Motor neuron (in vitro differentiated cells): ENCODE measurements at regions of chr2 and their contacts with region 1.

Region 1: GRCh38 chr2:70070541-70071268 is 16.6 kb upstream of the PCBP1 start:
- ATAC-seq: peak; percentile 96 to 100 (median 99)
- H3K4me3 ChIP-seq: no peak overlapping the region
- H3K27ac ChIP-seq: peak overlapping the region; percentile 57 to 81
- H3K4me1 ChIP-seq: peaks cover 0 to 10% of the 10 kb centered on the region in 2 donors

Region 2: DNA sequence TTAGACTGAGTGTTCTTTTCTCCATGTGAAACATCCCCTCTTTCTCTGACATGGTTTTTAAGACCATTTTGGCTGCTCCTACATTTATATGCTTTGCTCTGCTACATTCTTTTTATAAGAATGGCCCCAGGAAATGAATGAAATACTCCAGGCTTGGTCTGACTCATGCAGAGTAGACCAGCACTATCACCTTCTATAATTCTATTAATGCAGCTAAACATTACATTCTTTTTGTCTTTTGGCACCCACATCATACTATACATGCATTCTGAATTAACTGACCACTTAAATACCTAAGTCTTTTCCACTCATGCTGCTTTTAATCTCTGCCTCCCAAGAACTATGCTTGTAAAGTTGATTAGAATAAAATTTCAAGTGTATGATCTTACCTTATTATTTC is 521.3 kb before region 1 on chr2:
- in situ Hi-C with region 1: no loop called
- ATAC-seq: no peak
- H3K4me3 ChIP-seq: no peak overlapping the region
- H3K27ac ChIP-seq: no peak overlapping the region
- H3K4me1 ChIP-seq: no peaks in the 10 kb centered on the region

Region 3: DNA sequence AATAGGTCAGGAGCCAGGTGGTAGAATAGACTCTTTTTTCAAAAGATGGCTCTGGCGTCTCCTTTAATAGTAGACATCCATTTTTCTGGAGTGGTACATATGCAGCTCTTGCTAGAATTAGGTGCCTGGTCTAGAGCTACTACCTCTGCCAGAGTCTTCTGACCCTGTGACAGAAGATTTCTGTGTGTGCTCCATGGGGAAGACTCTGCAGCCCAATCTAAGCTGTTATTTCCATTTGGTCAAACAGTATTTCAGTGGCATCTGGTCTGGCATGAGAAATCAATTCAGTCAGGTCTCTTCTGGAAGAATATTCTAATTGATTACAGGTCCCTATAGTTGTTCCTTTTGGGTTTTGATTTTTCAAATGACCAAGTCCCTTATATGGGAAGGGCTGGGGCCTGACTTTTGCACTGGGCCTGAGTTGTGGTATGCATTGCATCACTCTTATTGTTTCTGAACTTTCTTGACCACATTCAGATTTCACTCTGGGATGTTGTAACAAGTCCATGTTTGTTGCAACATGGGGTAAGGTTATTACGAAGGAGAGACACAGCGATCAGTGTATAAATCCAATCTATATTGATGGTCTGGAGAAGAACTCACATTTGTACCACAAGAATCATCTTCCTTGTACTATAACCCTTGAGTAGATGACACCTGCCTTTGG is 143.7 kb before region 1 on chr2:
- in situ Hi-C with region 1: loop called in 4 of 9 experiments (anchors 10 to 25 kb)
- ATAC-seq: peak in 2 of 8 experiments; percentile 55
- H3K4me3 ChIP-seq: no peak overlapping the region
- H3K27ac ChIP-seq: no peak overlapping the region
- H3K4me1 ChIP-seq: peaks cover 0 to 3% of the 10 kb centered on the region in 2 donors

Region 4: DNA sequence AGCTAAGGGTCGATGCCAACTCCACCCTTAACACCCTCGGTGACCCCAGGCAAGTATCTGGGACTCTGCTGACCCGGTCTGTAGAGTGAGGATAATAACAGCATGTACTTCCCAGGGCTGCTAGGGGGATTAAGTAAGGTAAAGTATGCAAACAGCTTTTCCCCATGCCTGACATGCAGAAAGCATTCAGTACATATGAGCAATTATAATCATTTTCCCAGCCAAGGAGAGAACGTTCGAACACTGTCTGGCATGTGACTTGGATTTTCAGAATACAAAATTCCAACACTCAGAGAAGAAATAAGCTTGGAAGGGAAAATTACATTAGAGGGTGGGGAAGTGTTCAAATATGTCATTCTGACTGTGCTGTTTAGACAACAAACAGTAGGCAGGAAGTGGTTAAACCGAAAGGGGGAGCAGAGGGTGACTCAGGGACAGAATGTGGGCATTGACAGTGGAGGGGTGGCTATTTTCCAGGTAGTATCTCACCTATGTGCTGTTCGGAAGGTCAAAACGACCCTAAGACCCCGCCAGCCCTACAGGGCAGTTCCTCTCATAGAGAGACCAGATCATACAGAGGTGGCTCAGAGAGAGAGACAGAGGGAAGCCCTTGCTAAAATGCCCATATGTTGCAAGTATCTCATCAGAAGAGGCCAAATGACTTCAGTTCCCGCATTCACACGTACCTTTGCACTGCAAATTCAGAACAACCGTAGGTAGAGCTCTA is 124.2 kb before region 1 on chr2:
- in situ Hi-C with region 1: loop called in 2 of 9 experiments (anchors 25 kb)
- ATAC-seq: peak in 3 of 8 experiments; percentile 68 to 80 (median 68)
- H3K4me3 ChIP-seq: no peak overlapping the region
- H3K27ac ChIP-seq: no peak overlapping the region
- H3K4me1 ChIP-seq: no peaks in the 10 kb centered on the region

Region 5: DNA sequence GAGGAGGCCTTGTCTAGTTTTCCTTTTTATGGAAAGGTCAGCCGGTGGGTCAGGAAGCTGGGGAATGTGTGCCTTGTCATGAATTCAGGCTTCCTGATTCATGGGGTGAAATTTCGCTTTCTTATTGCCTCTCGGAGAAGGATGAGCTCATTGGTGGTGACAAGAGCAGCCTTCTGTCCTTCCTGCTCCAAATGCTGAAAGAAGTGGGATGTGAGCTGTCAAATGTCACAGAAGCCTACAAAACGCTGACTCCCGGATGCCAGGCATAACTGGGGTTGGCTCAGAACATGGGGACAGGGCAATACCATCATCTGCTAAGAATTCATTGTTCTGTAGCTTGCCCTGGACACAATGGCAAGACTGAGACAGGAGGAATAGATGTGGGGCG is 287.0 kb after region 1 on chr2:
- in situ Hi-C with region 1: no loop called
- ATAC-seq: peak in 4 of 8 experiments; percentile 22 to 57 (median 48)
- H3K4me3 ChIP-seq: no peak overlapping the region
- H3K27ac ChIP-seq: no peak overlapping the region
- H3K4me1 ChIP-seq: no peaks in the 10 kb centered on the region